ENCODE measurements at regions of chr5 and their contacts with region 1.

Region 1: GRCh38 chr5:143290125-143290524 is 113.4 kb downstream of the NR3C1 start:
- DNase-seq: no peak
- H3K4me3 ChIP-seq: no peak overlapping the region
- H3K27me3 ChIP-seq: no peaks in the 10 kb centered on the region
- CTCF ChIP-seq: no peak

Region 2: GRCh38 chr5:143302341-143302740 is 12.2 kb after region 1 on chr5:
- CTCF ChIA-PET with region 1: no interaction called
- POLR2A ChIA-PET with region 1: no interaction called
- DNase-seq: no peak
- H3K4me3 ChIP-seq: no peak overlapping the region
- H3K27me3 ChIP-seq: no peaks in the 10 kb centered on the region
- CTCF ChIP-seq: no peak

Region 3: GRCh38 chr5:143337946-143338345 is 47.8 kb after region 1 on chr5:
- CTCF ChIA-PET with region 1: no interaction called
- POLR2A ChIA-PET with region 1: no interaction called
- DNase-seq: no peak
- H3K4me3 ChIP-seq: no peak overlapping the region
- H3K27me3 ChIP-seq: no peaks in the 10 kb centered on the region
- CTCF ChIP-seq: no peak

Region 4: GRCh38 chr5:143398451-143399237 is 108.5 kb after region 1 on chr5:
- CTCF ChIA-PET with region 1: no interaction called
- POLR2A ChIA-PET with region 1: interaction called, 26 read pairs
- DNase-seq: no peak
- H3K4me3 ChIP-seq: peak overlapping the region; percentile 30
- H3K27me3 ChIP-seq: no peaks in the 10 kb centered on the region
- CTCF ChIP-seq: no peak

Measured in BJ (cell line).